ENCODE measurements at regions of chr1 and their contacts with region 1.

Region 1: GRCh38 chr1:228212966-228213844 is 5.4 kb downstream of the OBSCN start:
- DNase-seq: peak; percentile 73 to 91
- H3K4me3 ChIP-seq: peak overlapping the region; percentile 46 to 97 (median 62)
- H3K27ac ChIP-seq: peak overlapping the region; percentile 63; the same call in 1 of the 2 replicates
- H3K4me1 ChIP-seq: peaks cover 0 to 7% (median 2%) of the 10 kb centered on the region in 4 experiments; a peak in 4 of 7 replicates
- H3K27me3 ChIP-seq: peaks cover 2 to 21% (median 13%) of the 10 kb centered on the region in 4 experiments; a peak in 6 of 7 replicates
- CTCF ChIP-seq: peak in 2 of 3 experiments; percentile 59 to 63; a peak in 3 of 4 replicates
- EP300 ChIP-seq: no peak
- POLR2A ChIP-seq: no peak; a peak in 1 of 3 replicates
- RAD21 ChIP-seq: peak; percentile 43 to 54; a peak in 3 of 4 replicates

Region 2: DNA sequence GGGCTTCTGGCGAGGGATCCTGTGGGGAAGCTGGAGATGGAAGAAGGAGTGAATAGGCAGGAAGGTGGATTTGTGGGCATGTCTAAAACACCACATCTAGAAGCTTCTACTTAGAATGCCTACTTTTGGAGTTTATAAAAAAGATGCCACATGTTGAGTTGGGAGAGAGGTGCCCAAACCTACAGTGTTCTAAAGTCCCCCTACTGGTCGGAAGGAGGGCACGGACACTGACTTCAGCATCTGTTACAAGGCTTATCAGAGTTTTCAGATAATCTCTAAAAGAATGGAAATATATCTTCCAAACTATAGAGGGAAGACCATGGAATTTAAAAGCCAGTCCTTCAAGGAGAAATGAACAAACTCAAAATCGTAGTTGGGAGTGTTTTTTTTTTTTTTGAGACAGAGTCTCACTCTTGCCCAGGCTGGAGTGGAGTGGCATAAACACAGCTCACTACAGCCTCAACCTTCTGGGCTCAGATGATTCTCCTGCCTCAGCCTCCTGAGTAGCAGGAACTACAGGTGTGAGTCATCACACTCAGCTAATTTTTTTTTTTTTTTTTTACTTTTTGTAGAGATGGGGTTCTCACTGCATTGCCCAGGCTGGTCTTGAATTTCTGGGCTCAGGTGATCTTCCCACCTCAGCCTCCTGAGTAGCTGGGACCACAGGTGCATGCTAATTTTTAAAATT is 32.8 kb before region 1 on chr1:
- CTCF ChIA-PET with region 1: interaction called, 10 read pairs
- POLR2A ChIA-PET with region 1: interaction called, 3 read pairs
- DNase-seq: no peak
- H3K4me3 ChIP-seq: no peak overlapping the region
- H3K27ac ChIP-seq: no peak overlapping the region
- H3K4me1 ChIP-seq: no peaks in the 10 kb centered on the region
- H3K27me3 ChIP-seq: no peaks in the 10 kb centered on the region; a peak in 1 of 7 replicates
- CTCF ChIP-seq: peak in 2 of 3 experiments; percentile 39 to 53; a peak in 3 of 4 replicates
- EP300 ChIP-seq: no peak
- POLR2A ChIP-seq: no peak
- RAD21 ChIP-seq: no peak; a peak in 1 of 4 replicates

Region 3: GRCh38 chr1:228224198-228225164 is 11.3 kb after region 1 on chr1:
- CTCF ChIA-PET with region 1: interaction called, 5 read pairs
- POLR2A ChIA-PET with region 1: interaction called, 10 read pairs
- DNase-seq: peak in 1 of 2 experiments; percentile 30
- H3K4me3 ChIP-seq: no peak overlapping the region
- H3K27ac ChIP-seq: no peak overlapping the region
- H3K4me1 ChIP-seq: no peaks in the 10 kb centered on the region; a peak in 1 of 7 replicates
- H3K27me3 ChIP-seq: no peaks in the 10 kb centered on the region
- CTCF ChIP-seq: no peak
- EP300 ChIP-seq: no peak
- POLR2A ChIP-seq: no peak
- RAD21 ChIP-seq: no peak

Region 4: GRCh38 chr1:228274452-228275221 is 61.4 kb after region 1 on chr1:
- CTCF ChIA-PET with region 1: interaction called, 10 read pairs
- POLR2A ChIA-PET with region 1: interaction called, 5 read pairs
- DNase-seq: no peak
- H3K4me3 ChIP-seq: peak overlapping the region in 1 of 4 experiments; percentile 71; a peak in 1 of 8 replicates
- H3K27ac ChIP-seq: no peak overlapping the region
- H3K4me1 ChIP-seq: peaks cover 0 to 7% (median 1%) of the 10 kb centered on the region in 4 experiments; a peak in 4 of 7 replicates
- H3K27me3 ChIP-seq: peaks cover 0 to 5% (median 3%) of the 10 kb centered on the region in 4 experiments; a peak in 2 of 7 replicates
- CTCF ChIP-seq: peak in 1 of 3 experiments; percentile 19; a peak in 1 of 4 replicates
- EP300 ChIP-seq: no peak
- POLR2A ChIP-seq: no peak
- RAD21 ChIP-seq: no peak; a peak in 1 of 4 replicates

Region 5: DNA sequence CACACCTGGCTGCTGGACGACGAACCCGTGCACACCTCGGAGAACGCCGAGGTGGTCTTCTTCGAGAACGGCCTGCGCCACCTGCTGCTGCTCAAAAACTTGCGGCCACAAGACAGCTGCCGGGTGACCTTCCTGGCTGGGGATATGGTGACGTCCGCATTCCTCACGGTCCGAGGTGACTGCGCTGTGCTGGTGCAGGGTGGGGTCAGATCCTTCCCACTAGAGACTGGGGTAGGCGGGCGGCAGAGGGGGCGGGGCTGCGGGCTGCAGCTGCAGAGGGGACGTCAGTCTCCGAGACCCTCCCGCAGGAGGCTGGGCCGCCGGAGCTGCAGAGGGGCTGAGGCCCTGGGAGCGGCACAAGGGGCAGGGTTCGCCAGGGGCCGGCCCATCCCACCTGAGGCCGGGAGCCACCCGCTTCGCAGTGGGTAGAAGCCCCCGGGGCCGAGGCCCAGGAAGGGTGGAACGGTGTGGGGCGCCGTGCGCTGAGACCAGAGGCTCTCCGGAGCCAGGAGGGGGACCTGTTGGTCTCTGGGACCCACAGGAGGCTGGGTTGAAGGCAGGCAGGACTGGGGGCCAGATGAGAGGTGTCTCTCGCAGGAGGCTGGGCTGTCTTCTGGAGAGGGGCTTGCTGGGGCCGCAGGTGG is 102.9 kb after region 1 on chr1:
- CTCF ChIA-PET with region 1: no interaction called
- POLR2A ChIA-PET with region 1: no interaction called
- DNase-seq: no peak
- H3K4me3 ChIP-seq: no peak overlapping the region
- H3K27ac ChIP-seq: no peak overlapping the region
- H3K4me1 ChIP-seq: no peaks in the 10 kb centered on the region
- H3K27me3 ChIP-seq: no peaks in the 10 kb centered on the region
- CTCF ChIP-seq: no peak
- EP300 ChIP-seq: no peak
- POLR2A ChIP-seq: no peak
- RAD21 ChIP-seq: no peak